ENCODE measurements at regions of chr11 and their contacts with region 1.

Region 1: DNA sequence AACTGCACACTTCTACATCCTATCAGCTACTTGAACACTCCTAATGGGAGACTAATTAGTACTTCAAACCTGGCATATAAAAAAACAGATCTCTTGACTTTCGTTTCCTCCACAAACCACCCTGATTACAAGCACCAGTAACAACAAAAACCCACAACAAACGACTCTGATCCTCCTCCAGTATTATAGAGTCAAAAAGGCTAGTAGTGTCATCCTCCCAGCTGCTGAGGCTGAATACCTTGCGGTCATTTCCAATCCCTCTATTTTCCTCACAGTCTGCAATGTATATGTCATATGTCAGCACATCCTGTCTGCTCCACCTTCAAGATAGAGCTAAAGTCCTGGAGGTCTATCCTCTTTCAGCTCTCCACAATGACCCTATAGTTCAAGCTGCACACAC is 688.9 kb upstream of the RAG2 start:
- DNase-seq: no peak
- ATAC-seq: no peak
- H3K4me3 ChIP-seq: no peak overlapping the region
- H3K4me3 Mint-ChIP-seq: no peak overlapping the region
- H3K27ac ChIP-seq: no peak overlapping the region
- H3K27ac Mint-ChIP-seq: no peak overlapping the region
- H3K4me1 ChIP-seq: no peaks in the 10 kb centered on the region
- H3K4me1 Mint-ChIP-seq: no peaks in the 10 kb centered on the region
- H3K27me3 ChIP-seq: no peaks in the 10 kb centered on the region
- H3K27me3 Mint-ChIP-seq: no peaks in the 10 kb centered on the region
- CTCF ChIP-seq: no peak

Region 2: DNA sequence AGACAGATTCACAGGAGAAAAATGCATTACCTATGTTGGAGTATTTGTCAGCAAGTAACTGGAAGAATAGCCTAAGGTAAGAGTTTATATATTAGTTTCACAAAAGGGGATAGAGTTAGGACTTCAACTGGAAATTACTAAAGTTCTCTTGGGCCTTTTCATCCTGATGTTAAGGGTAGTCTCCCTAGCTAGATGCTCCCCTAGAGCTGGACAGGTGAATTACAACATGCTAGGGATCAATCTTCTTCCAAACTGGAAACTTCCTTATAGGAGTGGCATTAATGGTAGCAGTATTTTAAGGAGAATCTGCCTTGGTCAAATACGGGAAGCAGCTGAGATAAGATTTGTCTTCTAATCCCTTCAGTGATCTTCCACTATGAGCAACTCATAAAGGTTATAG is 56.0 kb before region 1 on chr11:
- CTCF ChIA-PET with region 1: no interaction called
- POLR2A ChIA-PET with region 1: no interaction called
- intact Hi-C with region 1: loop called in 1 of 2 experiments (anchors 10 kb)
- DNase-seq: no peak
- ATAC-seq: no peak
- H3K4me3 ChIP-seq: no peak overlapping the region
- H3K4me3 Mint-ChIP-seq: no peak overlapping the region
- H3K27ac ChIP-seq: no peak overlapping the region
- H3K27ac Mint-ChIP-seq: no peak overlapping the region
- H3K4me1 ChIP-seq: no peaks in the 10 kb centered on the region
- H3K4me1 Mint-ChIP-seq: no peaks in the 10 kb centered on the region
- H3K27me3 ChIP-seq: no peaks in the 10 kb centered on the region
- H3K27me3 Mint-ChIP-seq: no peaks in the 10 kb centered on the region
- CTCF ChIP-seq: no peak

Region 3: GRCh38 chr11:37378958-37379357 is 92.1 kb after region 1 on chr11:
- CTCF ChIA-PET with region 1: no interaction called
- POLR2A ChIA-PET with region 1: no interaction called
- intact Hi-C with region 1: no loop called
- DNase-seq: no peak
- ATAC-seq: no peak
- H3K4me3 ChIP-seq: no peak overlapping the region
- H3K4me3 Mint-ChIP-seq: no peak overlapping the region
- H3K27ac ChIP-seq: no peak overlapping the region
- H3K27ac Mint-ChIP-seq: no peak overlapping the region
- H3K4me1 ChIP-seq: no peaks in the 10 kb centered on the region
- H3K4me1 Mint-ChIP-seq: no peaks in the 10 kb centered on the region
- H3K27me3 ChIP-seq: no peaks in the 10 kb centered on the region
- H3K27me3 Mint-ChIP-seq: no peaks in the 10 kb centered on the region
- CTCF ChIP-seq: no peak

Region 4: GRCh38 chr11:37483761-37484160 is 196.9 kb after region 1 on chr11:
- CTCF ChIA-PET with region 1: no interaction called
- POLR2A ChIA-PET with region 1: no interaction called
- intact Hi-C with region 1: no loop called
- DNase-seq: no peak
- ATAC-seq: no peak
- H3K4me3 ChIP-seq: no peak overlapping the region
- H3K4me3 Mint-ChIP-seq: no peak overlapping the region
- H3K27ac ChIP-seq: no peak overlapping the region
- H3K27ac Mint-ChIP-seq: no peak overlapping the region
- H3K4me1 ChIP-seq: no peaks in the 10 kb centered on the region
- H3K4me1 Mint-ChIP-seq: no peaks in the 10 kb centered on the region
- H3K27me3 ChIP-seq: no peaks in the 10 kb centered on the region
- H3K27me3 Mint-ChIP-seq: no peaks in the 10 kb centered on the region
- CTCF ChIP-seq: no peak

Region 5: DNA sequence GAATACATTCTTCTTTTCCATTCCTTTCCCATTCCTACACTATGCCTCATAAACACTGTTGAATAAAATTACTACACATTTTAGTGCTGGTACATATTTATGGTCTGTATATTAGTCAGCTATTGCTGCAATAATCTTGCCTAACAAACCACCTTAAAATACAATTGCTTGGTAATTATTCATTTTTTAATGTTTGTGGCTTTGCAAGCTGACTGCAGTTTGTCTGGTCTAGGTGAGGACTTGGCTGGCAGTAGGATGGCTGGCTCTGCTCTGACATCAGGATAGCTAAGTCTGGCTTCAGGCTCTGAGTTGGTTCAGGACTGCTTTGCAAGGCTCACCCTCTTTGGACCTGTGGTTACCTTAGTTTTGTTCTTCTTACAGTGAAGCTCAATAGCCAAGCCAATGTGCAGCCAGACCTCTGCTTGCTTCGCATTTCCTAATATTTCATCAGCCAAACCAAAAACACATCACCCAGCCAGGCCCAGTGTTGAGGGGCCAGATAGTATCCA is 224.6 kb after region 1 on chr11:
- CTCF ChIA-PET with region 1: no interaction called
- POLR2A ChIA-PET with region 1: no interaction called
- intact Hi-C with region 1: no loop called
- DNase-seq: no peak
- ATAC-seq: no peak
- H3K4me3 ChIP-seq: no peak overlapping the region
- H3K4me3 Mint-ChIP-seq: no peak overlapping the region
- H3K27ac ChIP-seq: no peak overlapping the region
- H3K27ac Mint-ChIP-seq: no peak overlapping the region
- H3K4me1 ChIP-seq: no peaks in the 10 kb centered on the region
- H3K4me1 Mint-ChIP-seq: no peaks in the 10 kb centered on the region
- H3K27me3 ChIP-seq: no peaks in the 10 kb centered on the region
- H3K27me3 Mint-ChIP-seq: no peaks in the 10 kb centered on the region
- CTCF ChIP-seq: no peak

Measured in CD8-positive, alpha-beta T cell (primary cell).